ENCODE measurements at regions of chr2 and their contacts with region 1.

Region 1: GRCh38 chr2:171086352-171087290 is 74.1 kb downstream of the TLK1 start:
- DNase-seq: peak; percentile 79
- ATAC-seq: peak; percentile 75
- H3K4me3 Mint-ChIP-seq: peak overlapping the region; percentile 69
- H3K27ac Mint-ChIP-seq: peak overlapping the region; percentile 73
- H3K4me1 Mint-ChIP-seq: peaks cover 71% of the 10 kb centered on the region
- H3K27me3 Mint-ChIP-seq: no peaks in the 10 kb centered on the region

Region 2: DNA sequence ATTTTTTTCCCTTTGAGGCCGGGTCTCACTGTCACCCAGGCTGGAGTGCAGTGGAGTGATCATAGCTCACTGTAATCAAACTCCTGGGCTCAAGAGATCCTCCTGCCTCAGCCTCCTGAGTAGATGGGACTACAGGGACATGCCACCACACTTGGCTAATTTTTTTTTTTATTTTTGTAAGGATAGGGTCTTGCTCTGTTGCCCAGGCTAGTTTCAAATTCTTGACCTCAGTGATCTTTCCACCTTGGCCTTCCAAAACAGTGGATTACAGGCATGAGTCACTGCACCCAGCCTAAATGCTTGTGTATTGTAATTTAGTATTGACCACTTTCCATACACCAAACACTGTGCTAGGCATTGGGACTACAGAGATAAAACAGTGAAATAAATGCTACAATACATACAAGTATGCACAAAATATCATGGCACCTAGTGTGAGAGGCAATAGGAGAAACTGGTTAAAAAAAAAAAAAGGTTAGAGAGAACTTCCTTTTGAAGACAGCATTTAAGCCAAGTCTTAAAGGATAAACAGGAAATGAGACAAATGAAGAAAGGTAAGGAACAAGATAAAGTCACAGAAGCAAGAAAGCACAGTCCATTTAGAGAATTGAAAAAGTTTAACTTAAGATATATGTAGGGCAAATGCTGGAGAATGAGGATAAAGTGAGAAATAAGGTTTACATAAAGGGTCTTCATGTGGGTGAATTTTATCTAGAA is 44.2 kb before region 1 on chr2:
- CTCF ChIA-PET with region 1: interaction called, 6 read pairs
- POLR2A ChIA-PET with region 1: no interaction called
- intact Hi-C with region 1: loop called (anchors 2 to 5 kb)
- DNase-seq: no peak
- ATAC-seq: no peak
- H3K4me3 Mint-ChIP-seq: no peak overlapping the region
- H3K27ac Mint-ChIP-seq: peak overlapping the region; percentile 87
- H3K4me1 Mint-ChIP-seq: peaks cover 35% of the 10 kb centered on the region
- H3K27me3 Mint-ChIP-seq: no peaks in the 10 kb centered on the region

Region 3: DNA sequence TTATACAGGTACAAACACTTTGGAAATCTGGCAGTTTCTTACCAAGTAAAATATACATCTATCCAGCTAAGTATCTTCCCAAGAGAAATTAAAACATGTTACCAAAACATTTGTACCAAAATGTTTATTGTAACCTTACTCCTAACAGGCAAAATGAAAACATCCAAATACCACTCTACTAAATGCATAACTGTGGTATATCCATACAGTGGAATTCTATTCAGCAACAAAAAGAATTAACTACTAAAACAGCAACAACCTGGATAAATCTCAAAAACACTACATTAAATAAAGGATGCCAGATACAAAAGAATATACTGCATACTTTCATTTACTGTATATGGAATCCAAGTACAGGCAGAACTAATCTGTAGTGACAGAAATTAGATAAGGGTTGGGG is 22.9 kb after region 1 on chr2:
- CTCF ChIA-PET with region 1: interaction called, 10 read pairs
- POLR2A ChIA-PET with region 1: no interaction called
- intact Hi-C with region 1: no loop called
- DNase-seq: no peak
- ATAC-seq: no peak
- H3K4me3 Mint-ChIP-seq: no peak overlapping the region
- H3K27ac Mint-ChIP-seq: no peak overlapping the region
- H3K4me1 Mint-ChIP-seq: peaks cover 43% of the 10 kb centered on the region
- H3K27me3 Mint-ChIP-seq: no peaks in the 10 kb centered on the region

Region 4: GRCh38 chr2:171416009-171416926 is 329.6 kb after region 1 on chr2:
- CTCF ChIA-PET with region 1: interaction called, 17 read pairs
- POLR2A ChIA-PET with region 1: interaction called, 3 read pairs
- intact Hi-C with region 1: loop called (anchors 2 to 5 kb)
- DNase-seq: peak; percentile 93
- ATAC-seq: peak; percentile 98
- H3K4me3 Mint-ChIP-seq: peak overlapping the region; percentile 24
- H3K27ac Mint-ChIP-seq: peak overlapping the region; percentile 84
- H3K4me1 Mint-ChIP-seq: peaks cover 37% of the 10 kb centered on the region
- H3K27me3 Mint-ChIP-seq: no peaks in the 10 kb centered on the region

Region 5: GRCh38 chr2:171922230-171923022 is 835.8 kb after region 1 on chr2 and contains the start of gene HAT1:
- CTCF ChIA-PET with region 1: no interaction called
- POLR2A ChIA-PET with region 1: no interaction called
- intact Hi-C with region 1: no loop called
- DNase-seq: peak; percentile 99
- ATAC-seq: peak; percentile 96
- H3K4me3 Mint-ChIP-seq: peak within 1 kb of the TSS; percentile 94
- H3K27ac Mint-ChIP-seq: peak within 1 kb of the TSS; percentile 98
- H3K4me1 Mint-ChIP-seq: peaks cover 38% of the 10 kb centered on the region
- H3K27me3 Mint-ChIP-seq: no peaks in the 10 kb centered on the region
- total RNA-seq, gene HAT1: 88.5 to 92.6 TPM